ENCODE measurements at regions of chr19 and their contacts with region 1.

Region 1: GRCh38 chr19:2236314-2237050 is at the starts of genes PLEKHJ1 and SF3A2:
- DNase-seq: peak; percentile 100
- ATAC-seq: peak; percentile 82
- H3K4me3 Mint-ChIP-seq: peak within 1 kb of the TSS; percentile 99
- H3K27ac Mint-ChIP-seq: peak within 1 kb of the TSS; percentile 99
- H3K4me1 Mint-ChIP-seq: peaks cover 69% of the 10 kb centered on the region
- H3K27me3 Mint-ChIP-seq: no peaks in the 10 kb centered on the region
- CTCF ChIP-seq: no peak
- total RNA-seq, gene PLEKHJ1: 74.4 and 74.9 TPM in 2 replicates
- total RNA-seq, gene SF3A2: 107 and 117 TPM in 2 replicates

Region 2: DNA sequence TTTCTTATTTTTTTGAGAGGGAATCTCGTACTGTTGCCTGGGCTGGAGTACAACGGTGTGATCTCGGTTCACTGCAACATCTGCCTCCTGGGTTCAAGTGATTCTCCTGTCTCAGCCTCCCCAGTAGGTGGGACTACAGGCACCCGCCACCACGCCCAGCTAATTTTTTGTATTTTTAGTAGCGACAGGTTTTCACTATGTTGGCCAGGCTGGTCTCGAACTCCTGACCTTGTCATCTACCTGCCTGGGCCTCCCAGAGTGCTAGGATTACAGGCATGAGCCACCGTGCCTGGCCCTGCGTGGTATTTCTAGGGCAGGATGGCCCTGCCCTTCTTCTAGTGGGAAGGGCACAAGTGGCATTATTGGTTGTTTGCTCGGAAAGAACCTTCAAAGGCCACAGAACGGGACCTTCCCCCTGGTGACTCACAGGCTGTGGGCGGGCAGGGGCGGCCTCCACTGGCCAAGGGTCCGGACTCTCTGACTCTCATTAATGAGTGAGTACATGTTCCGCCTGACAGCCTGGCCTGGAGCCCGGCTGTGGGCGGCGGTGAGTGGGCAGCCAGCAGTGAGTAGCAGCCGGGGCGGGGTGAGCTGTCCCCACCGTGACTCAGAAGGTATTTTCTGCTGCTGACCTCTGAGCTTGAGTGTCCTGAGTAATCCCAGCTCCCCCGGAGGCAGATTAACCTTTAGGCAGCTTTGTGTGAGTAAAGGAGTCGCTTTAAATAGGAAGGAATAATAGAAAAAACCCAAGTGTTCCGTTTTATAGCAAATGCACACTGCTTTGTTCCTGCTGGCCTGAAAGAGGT is 67.7 kb before region 1 on chr19:
- CTCF ChIA-PET with region 1: interaction called, 7 read pairs
- POLR2A ChIA-PET with region 1: interaction called, 9 read pairs
- intact Hi-C with region 1: loop called (anchors 1 kb)
- DNase-seq: peak; percentile 74
- ATAC-seq: peak; percentile 49
- H3K4me3 Mint-ChIP-seq: peak overlapping the region; percentile 84
- H3K27ac Mint-ChIP-seq: peak overlapping the region; percentile 92
- H3K4me1 Mint-ChIP-seq: peaks cover 84% of the 10 kb centered on the region
- H3K27me3 Mint-ChIP-seq: no peaks in the 10 kb centered on the region
- CTCF ChIP-seq: no peak

Region 3: GRCh38 chr19:2269244-2269947 is 32.9 kb after region 1 on chr19:
- CTCF ChIA-PET with region 1: interaction called, 7 read pairs
- POLR2A ChIA-PET with region 1: interaction called, 103 read pairs
- intact Hi-C with region 1: loop called (anchors 1 kb)
- DNase-seq: peak; percentile 100
- ATAC-seq: peak; percentile 67
- H3K4me3 Mint-ChIP-seq: peak overlapping the region; percentile 92
- H3K27ac Mint-ChIP-seq: peak overlapping the region; percentile 91
- H3K4me1 Mint-ChIP-seq: peaks cover 60% of the 10 kb centered on the region
- H3K27me3 Mint-ChIP-seq: no peaks in the 10 kb centered on the region
- CTCF ChIP-seq: no peak

Region 4: GRCh38 chr19:2328401-2329148 is 92.1 kb after region 1 on chr19 and contains the starts of genes LSM7 and SPPL2B:
- CTCF ChIA-PET with region 1: no interaction called
- POLR2A ChIA-PET with region 1: interaction called, 7 read pairs
- intact Hi-C with region 1: loop called (anchors 1 kb)
- DNase-seq: peak; percentile 97
- ATAC-seq: peak; percentile 52
- H3K4me3 Mint-ChIP-seq: peak within 1 kb of the TSS; percentile 100
- H3K27ac Mint-ChIP-seq: peak within 1 kb of the TSS; percentile 99
- H3K4me1 Mint-ChIP-seq: peaks cover 86% of the 10 kb centered on the region
- H3K27me3 Mint-ChIP-seq: no peaks in the 10 kb centered on the region
- CTCF ChIP-seq: no peak
- total RNA-seq, gene LSM7: 149 and 152 TPM in 2 replicates
- total RNA-seq, gene SPPL2B: 112 and 142 TPM in 2 replicates

Region 5: DNA sequence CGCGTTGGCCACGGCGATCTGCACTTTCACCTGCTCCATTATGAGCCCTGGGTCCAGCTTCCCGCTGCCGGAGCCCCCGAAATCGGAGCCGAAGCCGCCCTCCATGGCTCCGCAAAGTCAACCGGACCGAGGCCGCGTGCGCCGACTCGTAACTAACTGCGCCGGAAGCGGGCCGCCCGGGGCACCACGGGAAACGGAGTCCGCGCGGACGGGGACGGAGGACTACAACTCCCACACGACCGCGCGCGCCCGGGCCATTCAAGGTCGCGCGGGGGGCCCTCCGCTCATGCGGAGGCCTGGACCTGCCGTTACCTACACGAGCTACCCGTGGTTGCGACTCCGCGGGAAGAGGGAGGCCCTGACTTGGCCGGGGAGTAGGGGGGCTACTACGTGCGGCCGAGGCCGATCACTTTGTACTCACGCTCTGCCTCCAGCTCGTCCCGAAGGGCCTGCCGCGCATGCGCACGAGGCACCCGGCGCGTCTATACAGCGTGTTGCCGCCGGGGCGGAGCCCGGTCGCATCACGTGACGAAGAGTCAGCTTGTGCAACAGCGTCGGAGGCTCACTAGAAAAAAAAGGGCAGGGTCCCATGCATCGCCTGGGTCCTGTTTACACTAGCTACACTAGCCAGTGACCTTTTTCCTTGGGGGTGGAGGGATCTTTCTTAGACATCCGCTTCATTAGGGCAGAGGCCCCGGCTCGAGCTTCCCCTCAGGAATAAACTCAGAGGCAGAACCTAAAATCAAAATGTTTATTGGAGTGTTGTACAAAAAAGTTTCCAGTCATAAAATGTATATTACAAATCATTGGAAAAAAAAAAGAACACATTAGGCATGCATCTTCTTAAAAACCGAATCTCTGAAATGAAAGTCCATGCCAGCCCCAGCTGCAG is 191.2 kb after region 1 on chr19 and contains the start of gene TIMM13:
- CTCF ChIA-PET with region 1: no interaction called
- POLR2A ChIA-PET with region 1: no interaction called
- intact Hi-C with region 1: loop called (anchors 1 kb)
- DNase-seq: peak; percentile 99
- ATAC-seq: peak; percentile 94
- H3K4me3 Mint-ChIP-seq: peak within 1 kb of the TSS; percentile 90
- H3K27ac Mint-ChIP-seq: peak within 1 kb of the TSS; percentile 95
- H3K4me1 Mint-ChIP-seq: peaks cover 21% of the 10 kb centered on the region
- H3K27me3 Mint-ChIP-seq: no peaks in the 10 kb centered on the region
- CTCF ChIP-seq: no peak
- total RNA-seq, gene TIMM13: 63.9 and 65.3 TPM in 2 replicates

Region 6: DNA sequence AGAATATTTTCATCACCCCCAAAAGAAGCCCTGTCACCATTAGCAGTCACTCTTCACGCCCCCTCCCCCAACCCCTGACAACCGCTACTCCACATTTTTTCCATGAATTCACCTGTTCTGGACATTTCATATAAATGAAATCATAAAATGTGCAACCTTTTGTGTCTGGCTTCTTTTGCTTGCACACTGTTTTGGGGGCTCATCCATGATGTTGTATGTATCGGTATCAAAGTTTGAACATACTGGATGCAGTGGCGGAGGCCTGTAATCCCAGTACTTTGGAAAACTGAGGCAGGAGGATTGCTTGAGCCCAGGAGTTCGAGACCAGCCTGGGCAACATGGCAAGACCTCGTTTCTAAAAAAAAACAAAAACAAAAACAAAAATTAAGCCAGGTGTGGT is 246.6 kb after region 1 on chr19:
- CTCF ChIA-PET with region 1: no interaction called
- POLR2A ChIA-PET with region 1: no interaction called
- intact Hi-C with region 1: no loop called
- DNase-seq: no peak
- ATAC-seq: no peak
- H3K4me3 Mint-ChIP-seq: no peak overlapping the region
- H3K27ac Mint-ChIP-seq: no peak overlapping the region
- H3K4me1 Mint-ChIP-seq: peaks cover 47% of the 10 kb centered on the region
- H3K27me3 Mint-ChIP-seq: no peaks in the 10 kb centered on the region
- CTCF ChIP-seq: no peak

Region 7: GRCh38 chr19:2507109-2507508 is 270.6 kb after region 1 on chr19:
- CTCF ChIA-PET with region 1: no interaction called
- POLR2A ChIA-PET with region 1: interaction called, 10 read pairs
- intact Hi-C with region 1: no loop called
- DNase-seq: no peak
- ATAC-seq: peak; percentile 14
- H3K4me3 Mint-ChIP-seq: peak overlapping the region; percentile 66
- H3K27ac Mint-ChIP-seq: peak overlapping the region; percentile 50
- H3K4me1 Mint-ChIP-seq: peaks cover 39% of the 10 kb centered on the region
- H3K27me3 Mint-ChIP-seq: no peaks in the 10 kb centered on the region
- CTCF ChIP-seq: no peak